Aorta (tissue), 5 donors: ENCODE measurements at regions of chr11 and their contacts with region 1.

Region 1: GRCh38 chr11:9748361-9748970 is 84.6 kb downstream of the SWAP70 start:
- DNase-seq: peak in 1 of 2 donors; percentile 72
- ATAC-seq: peak; percentile 90
- H3K4me3 ChIP-seq: no peak overlapping the region
- H3K27ac ChIP-seq: no peak overlapping the region
- H3K4me1 ChIP-seq: no peaks in the 10 kb centered on the region
- H3K27me3 ChIP-seq: no peaks in the 10 kb centered on the region

Region 2: DNA sequence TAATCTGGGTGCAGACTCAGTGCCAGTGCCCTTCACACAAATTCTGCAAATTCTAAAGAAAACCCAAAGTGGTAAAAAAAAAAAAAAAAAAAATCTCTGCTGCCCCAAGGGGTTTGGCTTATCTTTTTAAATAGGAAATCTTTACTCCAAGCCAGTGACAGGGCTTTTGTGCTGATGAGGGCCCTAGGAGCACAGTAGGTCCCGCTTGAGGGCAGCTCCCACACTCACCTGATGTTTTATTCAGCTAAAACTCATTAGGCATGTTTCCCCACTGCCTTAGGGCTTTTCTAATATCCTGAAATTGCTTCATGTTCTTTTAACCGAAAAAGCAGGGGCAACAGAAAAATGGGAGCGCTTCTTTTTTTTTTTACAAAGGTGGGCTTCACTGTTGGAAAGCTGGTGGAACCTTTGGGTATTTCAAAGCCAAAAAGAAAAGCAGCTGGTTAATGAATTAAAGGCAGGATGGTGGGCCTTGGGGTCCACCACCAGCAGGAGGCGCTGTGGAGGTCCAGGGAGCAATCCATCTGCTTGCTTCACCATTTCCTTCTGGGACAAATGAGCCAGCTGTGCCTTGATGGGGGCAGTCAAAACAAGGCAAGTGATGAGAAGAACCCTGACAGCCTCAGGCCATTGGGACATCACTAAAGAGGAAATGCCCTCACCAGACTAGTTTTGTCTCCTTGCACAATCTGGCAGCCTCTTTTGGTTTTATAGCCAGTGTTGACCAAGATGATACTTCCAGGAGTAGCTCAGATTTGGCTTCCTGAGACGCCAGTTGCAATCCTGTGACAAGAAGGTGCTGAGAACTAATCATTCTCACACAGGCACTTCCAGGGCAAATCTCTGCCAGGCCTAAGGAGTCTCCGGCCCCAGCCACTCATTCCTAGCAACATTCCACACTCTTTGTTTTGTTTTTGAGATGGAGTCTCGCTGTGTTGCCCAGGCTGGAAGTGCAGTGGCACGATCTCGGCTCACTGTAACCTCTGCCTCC is 213.4 kb before region 1 on chr11:
- intact Hi-C with region 1: loop called in 1 of 2 experiments (anchors 10 kb)
- DNase-seq: peak; percentile 85 to 93
- ATAC-seq: peak; percentile 53
- H3K4me3 ChIP-seq: no peak overlapping the region
- H3K27ac ChIP-seq: peak overlapping the region in 1 of 2 donors; percentile 8
- H3K4me1 ChIP-seq: no peaks in the 10 kb centered on the region
- H3K27me3 ChIP-seq: no peaks in the 10 kb centered on the region

Region 3: DNA sequence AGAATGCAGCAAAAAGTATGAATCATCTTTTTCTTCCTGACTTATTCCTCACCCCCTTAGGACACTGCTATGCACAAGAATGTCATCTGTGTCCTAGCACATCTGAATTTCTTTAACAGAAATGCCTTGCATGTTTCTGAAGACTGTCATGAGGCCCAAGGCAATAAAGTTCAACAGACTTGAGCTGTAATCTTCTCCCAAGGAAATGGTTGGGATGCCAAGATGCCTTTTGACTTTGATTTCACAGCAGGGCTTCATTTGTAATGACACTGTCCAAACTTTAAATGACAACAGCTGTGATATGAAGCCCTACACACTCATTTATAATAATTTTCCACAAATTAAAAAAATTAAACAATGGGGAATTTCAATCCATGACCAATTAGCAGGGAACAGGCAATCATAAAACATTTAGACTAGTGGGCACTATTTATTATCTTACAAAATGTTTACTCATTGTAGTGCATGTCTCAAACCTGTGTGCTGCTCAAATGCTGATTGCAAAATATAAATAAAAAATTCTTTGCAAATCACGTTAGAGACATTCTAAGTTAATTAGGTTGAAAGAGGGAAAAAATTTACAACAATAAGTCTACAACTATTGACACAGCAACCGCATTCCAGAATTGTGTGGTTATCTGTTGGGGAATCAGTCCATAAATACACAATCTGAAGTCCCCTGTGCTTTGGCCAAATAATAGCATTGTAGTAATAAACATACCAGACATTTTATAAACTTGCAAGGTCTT is 157.8 kb after region 1 on chr11:
- intact Hi-C with region 1: no loop called
- DNase-seq: no peak
- ATAC-seq: no peak
- H3K4me3 ChIP-seq: no peak overlapping the region
- H3K27ac ChIP-seq: no peak overlapping the region
- H3K4me1 ChIP-seq: no peaks in the 10 kb centered on the region
- H3K27me3 ChIP-seq: no peaks in the 10 kb centered on the region